Spleen (tissue), 13 donors: ENCODE measurements at regions of chr2 and their contacts with region 1.

Region 1: GRCh38 chr2:200319548-200320337 is 13.2 kb downstream of the SPATS2L start:
- DNase-seq: no peak
- H3K4me3 ChIP-seq: no peak overlapping the region
- H3K27ac ChIP-seq: no peak overlapping the region
- H3K4me1 ChIP-seq: peaks cover 0 to 15% (median 5%) of the 10 kb centered on the region in 6 donors
- H3K27me3 ChIP-seq: no peaks in the 10 kb centered on the region
- CTCF ChIP-seq: no peak
- POLR2A ChIP-seq: no peak

Region 2: GRCh38 chr2:200466425-200467418 is 147.0 kb after region 1 on chr2:
- intact Hi-C with region 1: loop called (anchors 10 kb)
- DNase-seq: no peak
- H3K4me3 ChIP-seq: peak overlapping the region in 1 of 8 donors; percentile 13
- H3K27ac ChIP-seq: peak overlapping the region; percentile 1 to 81 (median 72)
- H3K4me1 ChIP-seq: peaks cover 0 to 65% (median 39%) of the 10 kb centered on the region in 6 donors
- H3K27me3 ChIP-seq: no peaks in the 10 kb centered on the region
- CTCF ChIP-seq: no peak
- POLR2A ChIP-seq: no peak

Region 3: GRCh38 chr2:200913654-200914053 is 593.9 kb after region 1 on chr2:
- intact Hi-C with region 1: no loop called
- DNase-seq: no peak
- H3K4me3 ChIP-seq: no peak overlapping the region
- H3K27ac ChIP-seq: no peak overlapping the region
- H3K4me1 ChIP-seq: no peaks in the 10 kb centered on the region
- H3K27me3 ChIP-seq: no peaks in the 10 kb centered on the region
- CTCF ChIP-seq: no peak
- POLR2A ChIP-seq: no peak